ENCODE measurements at regions of chr6 and their contacts with region 1.

Region 1: GRCh38 chr6:85764844-85765243 is 122.2 kb upstream of the SYNCRIP start:
- DNase-seq: peak in 1 of 5 donors; percentile 14
- H3K4me3 ChIP-seq: no peak overlapping the region
- H3K27ac ChIP-seq: peak overlapping the region in 1 of 2 donors; percentile 68
- H3K4me1 ChIP-seq: peaks cover 9% of the 10 kb centered on the region
- H3K27me3 ChIP-seq: no peaks in the 10 kb centered on the region
- CTCF ChIP-seq: no peak
- EP300 ChIP-seq: no peak
- POLR2A ChIP-seq: no peak

Region 2: GRCh38 chr6:85714893-85715530 is 49.8 kb before region 1 on chr6:
- intact Hi-C with region 1: no loop called
- DNase-seq: no peak
- H3K4me3 ChIP-seq: no peak overlapping the region
- H3K27ac ChIP-seq: no peak overlapping the region
- H3K4me1 ChIP-seq: no peaks in the 10 kb centered on the region
- H3K27me3 ChIP-seq: no peaks in the 10 kb centered on the region
- CTCF ChIP-seq: no peak
- EP300 ChIP-seq: no peak
- POLR2A ChIP-seq: no peak

Region 3: DNA sequence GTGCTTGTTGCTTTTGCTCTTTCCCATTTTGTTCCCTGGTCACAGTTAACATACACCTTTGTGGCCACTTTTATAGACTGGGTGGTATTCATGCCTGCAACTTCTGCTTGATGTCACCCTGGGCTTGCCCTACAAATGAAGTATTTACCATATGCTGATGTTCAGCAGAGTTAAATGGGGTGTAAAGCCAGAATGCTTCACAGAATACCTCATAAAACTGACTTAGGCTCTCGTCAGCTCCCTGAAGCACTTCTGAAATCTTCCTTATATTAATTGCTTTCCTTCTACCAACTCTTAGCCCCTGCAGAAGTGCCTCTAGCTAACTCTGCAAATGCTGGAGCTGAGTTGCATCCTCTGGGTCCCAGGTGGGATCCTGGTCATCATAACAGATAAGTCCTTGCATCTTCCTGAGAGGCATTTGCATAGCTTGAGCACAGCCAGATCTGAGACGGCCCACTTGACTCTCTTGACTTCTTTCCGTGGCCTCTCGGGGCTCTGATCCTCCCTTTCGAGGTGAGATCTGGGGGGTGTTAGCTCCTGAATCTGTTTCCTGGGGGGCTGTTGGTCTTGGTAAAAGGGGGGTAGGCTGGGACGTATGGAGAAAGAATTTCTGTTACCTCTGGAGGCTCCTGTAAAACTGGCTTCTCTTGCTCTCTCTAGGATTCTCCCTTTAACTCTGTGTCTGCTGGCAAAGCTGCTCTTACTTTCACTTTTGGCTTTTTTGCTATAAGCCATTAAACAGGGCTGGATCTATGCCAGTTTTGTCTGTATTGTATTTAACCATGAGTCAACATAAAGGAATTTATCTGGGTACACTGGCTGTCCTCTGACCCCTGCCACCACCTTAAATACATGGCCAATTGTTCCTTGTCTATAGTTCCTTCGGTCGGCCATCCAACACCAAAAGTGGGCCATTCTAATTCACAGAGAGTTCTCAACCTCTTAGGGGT is 100.9 kb after region 1 on chr6:
- intact Hi-C with region 1: loop called in 1 of 4 experiments (anchors 10 kb)
- DNase-seq: peak in 1 of 5 donors; percentile 11
- H3K4me3 ChIP-seq: peak overlapping the region; percentile 45
- H3K27ac ChIP-seq: peak overlapping the region; percentile 26 to 78
- H3K4me1 ChIP-seq: peaks cover 20% of the 10 kb centered on the region
- H3K27me3 ChIP-seq: no peaks in the 10 kb centered on the region
- CTCF ChIP-seq: no peak
- EP300 ChIP-seq: no peak
- POLR2A ChIP-seq: no peak

Region 4: GRCh38 chr6:85945459-85946185 is 180.8 kb after region 1 on chr6:
- intact Hi-C with region 1: loop called in 1 of 4 experiments (anchors 10 kb)
- DNase-seq: no peak
- H3K4me3 ChIP-seq: no peak overlapping the region
- H3K27ac ChIP-seq: no peak overlapping the region
- H3K4me1 ChIP-seq: peaks cover 1% of the 10 kb centered on the region
- H3K27me3 ChIP-seq: no peaks in the 10 kb centered on the region
- CTCF ChIP-seq: no peak
- EP300 ChIP-seq: no peak
- POLR2A ChIP-seq: no peak

Region 5: GRCh38 chr6:86937219-86938079 is 1172.6 kb after region 1 on chr6 and contains the start of gene HTR1E:
- intact Hi-C with region 1: loop called in 1 of 4 experiments (anchors 10 kb)
- DNase-seq: peak; percentile 63 to 80 (median 72)
- H3K4me3 ChIP-seq: peak within 1 kb of the TSS; percentile 48
- H3K27ac ChIP-seq: peak within 1 kb of the TSS in 1 of 2 donors; percentile 36
- H3K4me1 ChIP-seq: no peaks in the 10 kb centered on the region
- H3K27me3 ChIP-seq: no peaks in the 10 kb centered on the region
- CTCF ChIP-seq: peak; percentile 32 to 60 (median 48)
- EP300 ChIP-seq: no peak
- POLR2A ChIP-seq: no peak
- total RNA-seq, gene HTR1E: 0.60 to 4.4 (median 0.89) TPM